ENCODE measurements at regions of chr6 and their contacts with region 1.

Region 1: DNA sequence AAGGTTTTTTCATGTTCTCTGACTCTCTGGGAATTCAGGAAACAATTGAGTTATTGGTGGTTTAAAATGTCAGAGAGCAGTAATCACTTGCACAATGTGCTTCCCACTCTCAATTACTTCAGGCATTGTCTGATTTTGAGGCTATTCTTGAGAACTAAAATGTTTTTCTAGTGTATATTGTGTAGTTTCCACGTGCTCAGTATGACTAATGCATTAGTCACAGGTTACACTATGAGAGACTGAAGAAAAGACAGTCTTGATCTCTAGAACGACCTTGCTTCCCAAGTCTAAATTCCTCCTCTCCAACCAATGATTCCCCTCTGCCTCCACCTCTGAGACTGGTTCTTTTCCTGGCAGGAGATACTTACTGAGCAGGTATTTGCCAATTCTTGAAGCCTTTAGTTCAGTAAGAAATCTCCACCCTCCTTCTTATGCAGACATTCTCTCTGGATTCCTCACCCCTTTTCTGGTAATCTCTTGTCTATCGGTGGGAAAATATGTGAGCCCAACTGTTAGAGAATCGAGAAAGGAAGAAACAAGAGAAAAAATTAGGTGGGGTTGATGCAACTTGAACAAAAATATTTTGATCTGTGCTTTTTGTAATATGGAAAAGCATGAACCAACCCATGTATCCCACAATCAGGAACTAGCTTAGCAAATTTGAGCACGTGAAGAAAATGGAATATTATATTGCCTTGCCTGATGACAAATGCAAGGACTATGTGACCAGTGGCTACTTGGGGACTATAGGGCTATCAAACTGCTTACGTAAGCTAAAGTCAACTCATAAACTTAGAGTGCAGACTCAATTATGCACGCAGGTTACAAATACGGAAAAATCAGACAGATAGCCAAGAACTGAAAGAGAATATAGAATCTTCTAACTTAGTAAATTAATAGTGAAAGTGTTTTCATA is 61.1 kb upstream of the SLC22A16 start:
- DNase-seq: peak; percentile 89
- H3K4me3 ChIP-seq: peak overlapping the region in 1 of 3 experiments; percentile 22
- H3K27ac ChIP-seq: peak overlapping the region; percentile 66
- H3K4me1 ChIP-seq: peaks cover 22% of the 10 kb centered on the region
- H3K27me3 ChIP-seq: no peaks in the 10 kb centered on the region
- CTCF ChIP-seq: no peak

Region 2: GRCh38 chr6:110446405-110446804 is 91.1 kb before region 1 on chr6:
- dilution Hi-C with region 1: no loop called
- DNase-seq: no peak
- H3K4me3 ChIP-seq: no peak overlapping the region
- H3K27ac ChIP-seq: no peak overlapping the region
- H3K4me1 ChIP-seq: peaks cover 20% of the 10 kb centered on the region
- H3K27me3 ChIP-seq: peaks cover 5% of the 10 kb centered on the region
- CTCF ChIP-seq: no peak

Region 3: DNA sequence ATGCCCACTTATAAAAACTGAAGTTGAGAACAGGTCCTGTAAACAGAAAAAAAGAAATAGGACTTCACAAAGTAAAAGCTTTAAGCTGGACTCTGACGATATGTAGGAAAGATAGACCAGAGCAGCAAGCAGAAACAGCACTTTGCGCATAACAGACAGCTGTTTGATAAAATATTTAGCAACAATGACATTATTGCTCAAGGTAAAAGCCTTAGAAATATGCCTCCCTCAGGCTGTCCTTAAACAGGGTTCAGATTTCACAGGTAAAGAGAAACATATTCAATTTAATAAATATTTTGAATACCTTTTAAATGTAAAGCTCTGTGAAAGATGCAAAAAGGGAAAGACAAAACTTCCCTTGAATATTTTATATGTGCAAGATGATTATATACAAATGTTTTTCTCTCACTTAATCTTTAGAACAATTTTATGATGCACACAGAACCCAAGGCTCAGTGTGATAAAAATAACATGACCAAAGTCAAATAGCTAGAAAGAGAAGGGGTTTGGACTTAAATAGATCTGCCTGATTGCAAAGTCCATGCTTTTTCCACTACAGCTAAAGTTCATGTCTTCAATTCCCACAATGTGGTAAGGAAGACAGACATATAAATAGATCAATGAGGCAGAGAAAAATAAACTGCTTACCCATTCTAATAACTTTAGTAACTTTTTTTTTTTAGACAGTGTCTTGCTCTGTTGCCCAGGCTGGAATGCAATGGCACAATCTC is 133.8 kb after region 1 on chr6:
- dilution Hi-C with region 1: loop called (anchors 10 kb)
- DNase-seq: no peak
- H3K4me3 ChIP-seq: no peak overlapping the region
- H3K27ac ChIP-seq: no peak overlapping the region
- H3K4me1 ChIP-seq: no peaks in the 10 kb centered on the region
- H3K27me3 ChIP-seq: no peaks in the 10 kb centered on the region
- CTCF ChIP-seq: no peak

Region 4: DNA sequence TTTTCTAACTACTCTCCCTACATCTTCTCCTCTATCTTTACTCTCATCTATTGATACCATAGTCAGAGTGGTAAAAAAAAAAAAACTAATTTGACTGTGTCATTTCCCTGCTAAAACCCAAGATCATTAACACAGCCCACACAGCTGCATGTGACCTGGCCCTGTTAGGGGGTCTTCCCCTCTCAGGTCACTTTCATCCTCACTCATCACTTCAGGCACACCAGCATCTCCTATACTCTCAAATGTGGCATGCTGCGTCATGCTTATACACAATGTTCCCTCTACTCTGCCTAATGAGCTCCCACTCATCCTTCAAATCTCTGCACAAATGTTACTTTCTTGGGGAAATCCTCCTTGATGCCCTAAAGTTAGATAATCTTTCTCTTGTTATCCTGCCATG is 191.0 kb after region 1 on chr6:
- dilution Hi-C with region 1: no loop called
- DNase-seq: no peak
- H3K4me3 ChIP-seq: no peak overlapping the region
- H3K27ac ChIP-seq: no peak overlapping the region
- H3K4me1 ChIP-seq: no peaks in the 10 kb centered on the region
- H3K27me3 ChIP-seq: no peaks in the 10 kb centered on the region
- CTCF ChIP-seq: no peak